Right ventricle myocardium inferior (tissue), 1 donor: ENCODE measurements at regions of chr7 and their contacts with region 1.

Region 1: GRCh38 chr7:67371429-67372305 is 375.0 kb downstream of the TYW1 start:
- DNase-seq: peak; percentile 75
- ATAC-seq: peak; percentile 87

Region 2: DNA sequence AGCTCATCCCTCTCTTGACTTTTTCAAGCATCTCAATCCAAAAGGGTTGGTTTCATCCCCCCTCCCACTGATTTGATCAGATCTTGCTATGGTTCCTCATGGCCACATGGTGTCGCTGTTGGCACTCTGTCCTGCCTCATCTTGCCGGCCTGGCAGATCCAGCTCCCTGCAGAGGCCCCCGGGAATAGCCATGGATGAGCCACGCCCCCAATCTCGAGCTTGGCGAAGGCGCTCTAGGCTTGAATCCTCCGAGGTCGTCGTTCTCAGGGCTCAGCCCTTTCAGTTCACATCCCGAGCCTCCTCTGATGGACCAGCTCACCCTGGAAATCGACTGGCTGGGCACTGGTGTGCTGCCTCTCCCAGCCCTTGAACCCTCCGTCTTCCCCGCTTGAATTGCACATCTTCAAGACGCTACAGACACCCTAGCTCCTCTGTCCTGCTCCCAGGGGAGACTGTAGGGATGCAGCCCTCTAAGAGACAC is 253.6 kb after region 1 on chr7:
- intact Hi-C with region 1: loop called (anchors 10 kb)
- DNase-seq: peak; percentile 83
- ATAC-seq: peak; percentile 90